ENCODE measurements at regions of chr15 and their contacts with region 1.

Region 1: DNA sequence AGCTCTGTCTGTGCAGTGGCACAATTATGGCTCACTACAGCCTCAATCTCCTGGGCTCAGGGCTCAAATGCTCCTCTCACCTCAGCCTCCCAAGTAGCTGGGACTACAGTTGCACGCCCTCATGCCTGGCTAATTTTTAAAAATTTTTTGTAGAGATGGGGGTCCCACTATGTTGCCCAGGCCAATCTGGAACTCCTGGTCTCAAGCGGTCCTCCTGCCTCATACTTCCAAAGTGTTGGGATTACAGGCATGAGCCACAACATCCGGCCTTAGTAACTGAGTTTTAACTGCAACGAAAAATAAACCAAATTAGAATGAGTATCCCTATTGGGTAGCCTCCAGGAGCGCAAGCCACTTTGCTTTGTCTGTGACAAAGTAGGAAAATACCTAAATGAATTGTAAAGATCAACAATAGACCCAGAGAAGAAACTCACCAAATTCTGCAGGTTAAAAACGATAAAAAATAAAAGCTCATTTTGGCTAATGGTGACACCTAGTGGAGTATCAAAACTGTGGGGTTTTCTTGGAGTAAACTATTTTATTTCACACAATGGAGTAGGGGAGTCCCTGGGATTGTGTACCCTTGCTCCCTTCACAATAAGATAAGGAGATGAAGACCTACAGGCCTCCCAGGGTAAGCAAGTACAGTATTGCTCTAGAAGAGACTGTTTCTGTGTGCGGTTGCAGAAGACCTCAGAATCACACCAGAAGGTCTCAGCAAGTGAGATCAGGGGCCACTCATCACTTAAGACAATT is 21.0 kb upstream of the CA12 start:
- DNase-seq: peak; percentile 71
- H3K4me3 Mint-ChIP-seq: no peak overlapping the region
- H3K27ac Mint-ChIP-seq: no peak overlapping the region
- H3K4me1 Mint-ChIP-seq: peaks cover 28% of the 10 kb centered on the region
- H3K27me3 Mint-ChIP-seq: no peaks in the 10 kb centered on the region

Region 2: GRCh38 chr15:63048115-63048775 is 354.4 kb before region 1 on chr15:
- intact Hi-C with region 1: loop called (anchors 2 kb)
- DNase-seq: peak; percentile 95
- H3K4me3 Mint-ChIP-seq: peak overlapping the region; percentile 81
- H3K27ac Mint-ChIP-seq: peak overlapping the region; percentile 59
- H3K4me1 Mint-ChIP-seq: peaks cover 21% of the 10 kb centered on the region
- H3K27me3 Mint-ChIP-seq: peaks cover 51% of the 10 kb centered on the region

Region 3: GRCh38 chr15:63157118-63157843 is 245.4 kb before region 1 on chr15 and contains the start of gene RPS27L:
- intact Hi-C with region 1: loop called (anchors 5 kb)
- DNase-seq: peak; percentile 97
- H3K4me3 Mint-ChIP-seq: peak within 1 kb of the TSS; percentile 100
- H3K27ac Mint-ChIP-seq: peak within 1 kb of the TSS; percentile 100
- H3K4me1 Mint-ChIP-seq: peaks cover 16% of the 10 kb centered on the region
- H3K27me3 Mint-ChIP-seq: no peaks in the 10 kb centered on the region
- total RNA-seq, gene RPS27L: 167 and 179 TPM in 2 replicates

Region 4: DNA sequence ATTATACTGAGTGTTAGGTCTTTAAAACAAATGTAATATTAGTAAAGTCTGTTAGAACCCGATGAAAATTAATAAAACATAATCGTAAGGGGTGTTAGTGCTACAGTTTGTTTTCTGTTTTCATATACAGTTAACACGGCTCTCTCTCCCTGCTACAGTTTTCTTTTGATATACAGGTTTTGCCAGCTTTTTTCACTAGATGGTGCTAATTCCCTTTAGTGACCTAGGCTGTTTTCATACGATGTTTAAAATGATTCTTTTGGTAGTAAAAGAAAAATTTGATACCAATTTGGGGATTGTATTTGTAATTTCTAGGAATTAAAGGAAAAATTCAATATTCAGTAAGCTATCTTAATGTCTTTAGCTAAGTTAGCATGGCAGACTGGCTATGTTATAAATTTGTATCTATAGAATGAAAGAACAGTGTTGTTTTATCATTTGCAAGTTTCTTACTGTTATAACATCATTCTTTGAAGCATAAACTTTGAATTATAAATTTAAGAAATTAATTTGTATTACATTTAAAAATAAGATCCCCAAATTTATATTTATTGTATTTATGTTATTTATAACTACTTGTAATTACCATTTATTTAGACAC is 113.8 kb before region 1 on chr15:
- intact Hi-C with region 1: loop called (anchors 1 kb)
- DNase-seq: peak; percentile 73
- H3K4me3 Mint-ChIP-seq: no peak overlapping the region
- H3K27ac Mint-ChIP-seq: no peak overlapping the region
- H3K4me1 Mint-ChIP-seq: peaks cover 4% of the 10 kb centered on the region
- H3K27me3 Mint-ChIP-seq: no peaks in the 10 kb centered on the region

Region 5: DNA sequence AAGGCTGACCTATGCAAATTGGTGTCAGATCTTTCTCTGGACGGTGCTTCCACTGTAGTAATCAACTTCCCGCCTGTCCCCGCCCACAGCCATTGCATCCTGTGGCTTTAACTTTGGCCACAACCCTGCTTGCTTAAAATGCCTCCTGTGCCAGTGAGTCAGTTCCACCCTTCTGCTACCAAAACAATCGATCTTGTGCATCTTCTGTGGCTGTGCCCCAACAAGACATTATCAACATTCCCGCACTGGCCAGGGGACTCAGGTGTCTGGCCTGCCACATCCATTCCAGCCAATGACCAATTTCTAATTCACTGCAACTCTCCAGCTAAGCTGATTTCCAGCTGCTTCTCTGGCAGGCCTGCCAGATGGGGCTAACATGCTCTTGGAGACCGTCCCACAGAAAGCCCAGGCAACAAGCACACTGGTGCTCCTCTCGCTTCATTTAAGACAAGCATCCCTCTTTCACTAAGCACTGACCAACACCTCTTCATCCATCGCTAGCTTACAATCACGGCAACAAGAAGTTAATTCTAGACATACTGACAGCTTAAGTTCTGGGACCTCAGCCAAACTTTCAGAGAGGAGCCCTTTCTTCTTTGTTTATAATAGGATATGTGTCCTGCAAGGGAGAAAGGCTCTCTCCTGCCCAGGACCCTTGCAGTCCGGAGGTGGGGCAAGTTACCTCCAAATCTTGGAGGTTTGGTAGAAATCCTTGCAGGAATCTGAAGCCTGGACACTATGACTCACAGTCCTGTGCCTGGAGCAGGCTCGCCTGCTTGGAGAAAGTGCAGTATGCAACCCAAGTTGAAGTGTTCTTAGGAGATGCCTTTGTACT is 27.8 kb before region 1 on chr15:
- intact Hi-C with region 1: loop called (anchors 2 kb)
- DNase-seq: peak; percentile 74
- H3K4me3 Mint-ChIP-seq: peak overlapping the region; percentile 59
- H3K27ac Mint-ChIP-seq: peak overlapping the region; percentile 75
- H3K4me1 Mint-ChIP-seq: peaks cover 50% of the 10 kb centered on the region
- H3K27me3 Mint-ChIP-seq: peaks cover 14% of the 10 kb centered on the region